WTC11 (cell line): ENCODE measurements at regions of chr11 and their contacts with region 1.

Region 1: GRCh38 chr11:46006418-46007070 is 84.1 kb downstream of the LARGE2 start:
- DNase-seq: no peak
- ATAC-seq: peak; percentile 74
- H3K4me3 Mint-ChIP-seq: no peak overlapping the region
- H3K27ac Mint-ChIP-seq: peak overlapping the region; percentile 58
- H3K4me1 Mint-ChIP-seq: peaks cover 52% of the 10 kb centered on the region
- H3K27me3 Mint-ChIP-seq: no peaks in the 10 kb centered on the region
- CTCF ChIP-seq: peak; percentile 61

Region 2: DNA sequence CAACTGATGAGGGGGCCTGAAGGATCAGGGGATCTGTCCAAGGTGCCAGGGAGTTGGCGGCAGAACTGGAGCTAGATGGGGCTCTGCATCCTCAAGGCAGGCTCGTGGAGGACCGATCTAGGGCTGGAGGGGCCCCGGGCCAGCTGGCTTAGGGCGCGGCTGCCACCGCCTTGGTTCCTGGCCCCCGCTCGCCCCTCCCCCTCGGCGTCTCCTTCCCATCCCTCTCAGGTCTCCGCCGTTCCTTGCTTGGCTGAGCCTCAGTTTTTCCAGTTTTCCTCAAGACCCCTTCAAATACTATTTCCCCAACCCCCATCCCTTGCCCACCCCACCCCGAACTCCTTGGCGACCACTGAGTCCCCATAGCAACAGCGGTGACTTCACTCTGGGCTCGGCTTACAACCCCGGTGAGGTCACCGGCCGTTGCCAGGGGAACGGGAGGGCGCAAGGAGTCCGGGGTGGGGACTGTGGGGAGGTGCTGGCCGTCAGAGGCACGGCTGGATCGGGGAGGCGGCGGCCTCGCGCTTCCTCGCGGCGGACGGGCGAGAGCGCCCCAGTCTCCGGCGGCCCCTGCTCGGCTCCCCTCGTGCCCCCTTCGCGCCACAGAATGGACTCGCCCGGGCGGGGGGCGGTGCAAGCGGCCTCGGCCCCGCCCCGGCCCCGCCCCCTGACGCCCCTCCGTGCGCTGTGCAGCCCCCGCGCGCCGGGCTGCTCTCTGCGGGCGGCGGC is 106.9 kb before region 1 on chr11:
- CTCF ChIA-PET with region 1: interaction called, 10 read pairs
- POLR2A ChIA-PET with region 1: no interaction called
- DNase-seq: peak; percentile 94
- ATAC-seq: peak; percentile 75
- H3K4me3 Mint-ChIP-seq: peak overlapping the region; percentile 61
- H3K27ac Mint-ChIP-seq: no peak overlapping the region
- H3K4me1 Mint-ChIP-seq: peaks cover 23% of the 10 kb centered on the region
- H3K27me3 Mint-ChIP-seq: peaks cover 6% of the 10 kb centered on the region
- CTCF ChIP-seq: no peak

Region 3: GRCh38 chr11:45939836-45940235 is 66.7 kb before region 1 on chr11:
- CTCF ChIA-PET with region 1: interaction called, 13 read pairs
- POLR2A ChIA-PET with region 1: no interaction called
- DNase-seq: no peak
- ATAC-seq: no peak
- H3K4me3 Mint-ChIP-seq: no peak overlapping the region
- H3K27ac Mint-ChIP-seq: no peak overlapping the region
- H3K4me1 Mint-ChIP-seq: peaks cover 10% of the 10 kb centered on the region
- H3K27me3 Mint-ChIP-seq: no peaks in the 10 kb centered on the region; the same call in 1 of the 2 replicates
- CTCF ChIP-seq: no peak

Region 4: DNA sequence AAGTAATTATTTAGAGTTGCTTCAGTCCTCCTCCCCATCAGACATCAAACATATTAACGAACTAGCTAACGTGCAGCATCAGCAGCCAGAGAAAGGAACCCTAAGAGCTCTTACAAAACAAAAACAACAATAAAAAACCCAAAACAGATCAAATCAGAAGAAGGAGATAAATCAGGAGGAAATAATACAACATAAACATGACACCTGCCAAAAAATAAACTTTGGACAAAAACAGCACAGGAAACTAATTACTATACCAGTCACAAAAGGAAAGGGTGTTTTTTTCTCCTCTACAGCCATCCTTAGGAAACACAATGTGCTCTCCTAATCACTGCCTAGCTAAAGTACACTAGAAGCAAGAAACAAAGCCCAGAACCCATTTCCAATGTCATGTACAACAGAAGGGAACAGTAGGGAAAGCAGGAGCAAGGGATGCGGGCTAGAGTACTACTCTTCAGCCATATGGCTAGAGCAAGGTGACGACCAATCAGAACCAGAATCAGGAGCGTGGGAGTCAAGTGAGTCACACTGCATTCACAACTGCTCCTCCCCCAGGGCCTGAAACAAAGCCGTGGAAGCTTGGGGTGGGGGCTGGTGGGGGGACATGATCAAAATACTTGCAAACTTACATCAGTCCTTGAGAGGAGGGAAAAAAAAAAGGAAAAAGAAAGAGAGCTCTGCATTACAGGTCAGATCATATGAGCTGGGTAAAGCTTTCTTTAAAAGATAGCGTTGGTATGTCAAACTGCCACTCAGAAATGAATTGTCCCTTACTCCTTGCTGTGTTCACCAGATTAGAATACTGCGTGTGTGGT is 23.7 kb before region 1 on chr11:
- CTCF ChIA-PET with region 1: interaction called, 22 read pairs
- POLR2A ChIA-PET with region 1: interaction called, 7 read pairs
- DNase-seq: peak; percentile 74
- ATAC-seq: peak; percentile 93
- H3K4me3 Mint-ChIP-seq: peak overlapping the region; percentile 43
- H3K27ac Mint-ChIP-seq: peak overlapping the region; percentile 94
- H3K4me1 Mint-ChIP-seq: peaks cover 29% of the 10 kb centered on the region
- H3K27me3 Mint-ChIP-seq: no peaks in the 10 kb centered on the region
- CTCF ChIP-seq: no peak

Region 5: GRCh38 chr11:46017341-46017740 is 10.8 kb after region 1 on chr11:
- CTCF ChIA-PET with region 1: interaction called, 17 read pairs
- POLR2A ChIA-PET with region 1: no interaction called
- DNase-seq: no peak
- ATAC-seq: no peak
- H3K4me3 Mint-ChIP-seq: no peak overlapping the region
- H3K27ac Mint-ChIP-seq: peak overlapping the region; percentile 76; the same call in 1 of the 2 replicates
- H3K4me1 Mint-ChIP-seq: peaks cover 23% of the 10 kb centered on the region
- H3K27me3 Mint-ChIP-seq: no peaks in the 10 kb centered on the region
- CTCF ChIP-seq: no peak

Region 6: DNA sequence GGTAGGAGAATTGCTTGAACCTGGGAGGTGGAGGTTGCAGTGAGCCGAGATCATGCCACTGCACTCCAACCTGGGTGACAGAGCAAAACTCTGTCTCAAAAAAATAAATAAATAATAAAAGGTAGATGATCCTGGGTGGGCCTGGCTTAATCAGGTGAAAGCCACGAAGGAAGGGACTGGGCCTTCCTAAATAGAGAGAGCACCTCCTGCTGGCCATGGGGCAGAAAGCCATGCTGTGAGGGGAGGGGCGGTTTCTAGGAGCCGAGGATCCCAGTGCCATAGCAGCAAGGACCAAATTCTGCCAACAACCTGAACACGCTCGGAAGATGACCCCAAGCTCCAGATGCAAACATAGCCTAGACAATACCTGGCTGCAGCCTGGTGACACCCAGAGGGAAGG is 316.2 kb after region 1 on chr11:
- CTCF ChIA-PET with region 1: no interaction called
- POLR2A ChIA-PET with region 1: no interaction called
- DNase-seq: peak; percentile 72
- ATAC-seq: peak; percentile 57
- H3K4me3 Mint-ChIP-seq: no peak overlapping the region
- H3K27ac Mint-ChIP-seq: no peak overlapping the region
- H3K4me1 Mint-ChIP-seq: peaks cover 13% of the 10 kb centered on the region
- H3K27me3 Mint-ChIP-seq: peaks cover 5% of the 10 kb centered on the region; the same call in 1 of the 2 replicates
- CTCF ChIP-seq: peak; percentile 41